ENCODE measurements at regions of chr10 and their contacts with region 1.

Region 1: DNA sequence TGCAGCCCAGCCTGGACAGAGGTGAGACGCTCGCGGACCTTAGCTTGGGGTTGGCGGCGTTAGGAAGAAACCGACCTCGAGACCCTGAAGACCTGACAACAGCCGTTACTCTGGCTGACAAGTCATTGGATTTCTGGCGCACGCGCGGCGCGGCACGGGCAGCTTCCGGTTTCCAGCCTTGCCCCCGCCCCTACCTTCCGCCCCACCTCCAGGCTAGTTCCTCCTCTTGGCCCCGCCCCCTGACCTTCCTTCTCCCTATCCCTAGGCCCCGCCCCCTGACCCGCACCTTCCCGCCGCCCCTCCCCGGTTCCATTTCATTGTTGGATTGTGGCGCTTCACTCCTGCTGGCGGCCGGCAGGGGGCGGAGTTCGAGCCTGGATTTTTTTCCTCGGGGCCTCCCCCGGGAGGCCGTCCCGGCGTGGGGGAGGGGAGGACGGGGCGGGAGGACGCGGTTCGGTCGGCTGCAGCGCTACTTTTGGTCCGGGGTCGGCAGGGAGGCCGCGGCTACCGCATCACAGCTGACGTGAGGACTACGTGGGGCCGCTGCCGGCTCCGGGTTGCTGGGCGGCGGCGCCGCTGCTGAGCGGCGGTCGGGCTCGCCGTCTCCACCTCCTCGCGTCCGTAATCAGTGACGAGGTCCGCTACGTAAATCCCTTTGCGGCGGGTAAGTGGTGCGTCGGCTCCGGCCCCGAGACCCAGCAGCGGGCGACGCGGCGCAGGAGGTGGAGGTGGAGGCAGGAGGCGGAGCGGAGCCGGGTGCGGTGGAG is at the start of gene CREM:
- DNase-seq: peak; percentile 94
- H3K4me3 ChIP-seq: peak within 1 kb of the TSS; percentile 68 to 91 (median 81)
- H3K27ac ChIP-seq: peak within 1 kb of the TSS; percentile 98
- H3K4me1 ChIP-seq: peaks cover 17% of the 10 kb centered on the region
- H3K27me3 ChIP-seq: no peaks in the 10 kb centered on the region
- CTCF ChIP-seq: peak; percentile 30 to 85
- total RNA-seq, gene CREM: 15.2 to 17.3 TPM

Region 2: DNA sequence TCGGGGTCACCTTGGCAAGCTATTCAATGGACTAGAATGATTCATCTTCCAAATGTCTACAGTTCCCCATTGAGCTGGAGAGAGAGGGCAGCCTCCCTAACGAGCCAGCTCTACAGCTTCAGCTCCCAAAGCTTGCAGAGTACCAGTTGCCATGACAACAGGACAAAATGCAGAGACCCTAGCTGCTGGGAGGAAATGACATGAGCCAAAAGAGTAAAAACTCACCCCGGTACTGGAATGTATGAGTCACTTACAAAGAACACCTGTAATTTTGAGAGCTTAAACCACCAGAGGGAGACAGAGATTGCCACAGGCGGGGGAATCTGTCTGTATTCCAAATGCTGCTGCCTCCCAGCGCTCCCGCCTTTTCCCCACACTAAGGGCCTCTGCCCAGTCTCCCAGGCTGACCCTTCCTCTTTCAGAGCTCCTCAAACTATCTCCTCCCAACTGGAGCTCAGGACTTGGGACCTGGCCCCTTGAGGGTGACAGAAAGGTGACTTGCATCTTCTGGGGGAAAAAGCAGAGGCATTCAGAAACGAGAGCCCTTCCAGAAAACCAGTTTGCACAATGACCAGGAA is 132.1 kb before region 1 on chr10:
- CTCF ChIA-PET with region 1: no interaction called
- dilution Hi-C with region 1: no loop called
- in situ Hi-C with region 1: no loop called
- intact Hi-C with region 1: loop called (anchors 1 kb)
- DNase-seq: peak; percentile 80
- H3K4me3 ChIP-seq: no peak overlapping the region
- H3K27ac ChIP-seq: peak overlapping the region; percentile 59
- H3K4me1 ChIP-seq: peaks cover 28% of the 10 kb centered on the region
- H3K27me3 ChIP-seq: no peaks in the 10 kb centered on the region
- CTCF ChIP-seq: peak; percentile 66 to 92

Region 3: DNA sequence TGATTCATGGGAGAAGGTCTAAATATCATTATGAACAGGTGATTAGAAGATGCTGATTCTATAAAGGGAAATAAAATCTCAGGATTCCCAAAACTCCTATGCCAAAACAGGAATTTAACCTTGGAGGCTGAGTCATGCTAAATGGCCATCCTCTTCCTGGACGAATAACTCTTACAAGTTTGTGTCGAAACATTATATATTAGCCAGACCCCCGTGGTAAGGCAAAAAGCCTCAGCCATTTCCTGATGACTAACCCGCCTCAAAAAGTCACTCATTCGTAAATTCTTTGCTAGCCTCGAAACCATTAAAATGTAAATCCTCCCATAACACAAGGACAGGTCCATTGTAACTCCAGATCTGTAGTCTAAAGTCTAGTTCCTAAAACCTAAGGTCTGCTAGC is 68.6 kb before region 1 on chr10:
- CTCF ChIA-PET with region 1: no interaction called
- dilution Hi-C with region 1: no loop called
- in situ Hi-C with region 1: no loop called
- intact Hi-C with region 1: no loop called
- DNase-seq: peak; percentile 73
- H3K4me3 ChIP-seq: no peak overlapping the region
- H3K27ac ChIP-seq: no peak overlapping the region
- H3K4me1 ChIP-seq: peaks cover 19% of the 10 kb centered on the region
- H3K27me3 ChIP-seq: no peaks in the 10 kb centered on the region
- CTCF ChIP-seq: no peak

Region 4: GRCh38 chr10:35195361-35196306 is 68.9 kb after region 1 on chr10:
- CTCF ChIA-PET with region 1: interaction called, 34 read pairs
- dilution Hi-C with region 1: no loop called
- in situ Hi-C with region 1: no loop called
- intact Hi-C with region 1: loop called (anchors 1 kb)
- DNase-seq: peak; percentile 90
- H3K4me3 ChIP-seq: peak overlapping the region; percentile 32 to 50 (median 43)
- H3K27ac ChIP-seq: peak overlapping the region; percentile 69
- H3K4me1 ChIP-seq: peaks cover 18% of the 10 kb centered on the region
- H3K27me3 ChIP-seq: no peaks in the 10 kb centered on the region
- CTCF ChIP-seq: peak; percentile 84 to 90

Region 5: GRCh38 chr10:35218339-35218955 is 91.7 kb after region 1 on chr10:
- CTCF ChIA-PET with region 1: interaction called, 5 read pairs
- dilution Hi-C with region 1: loop called (anchors 5 kb)
- in situ Hi-C with region 1: loop called in 1 of 2 experiments (anchors 5 kb)
- intact Hi-C with region 1: loop called (anchors 1 kb)
- DNase-seq: peak; percentile 65
- H3K4me3 ChIP-seq: no peak overlapping the region
- H3K27ac ChIP-seq: no peak overlapping the region
- H3K4me1 ChIP-seq: no peaks in the 10 kb centered on the region
- H3K27me3 ChIP-seq: no peaks in the 10 kb centered on the region
- CTCF ChIP-seq: peak; percentile 74 to 77

Region 6: DNA sequence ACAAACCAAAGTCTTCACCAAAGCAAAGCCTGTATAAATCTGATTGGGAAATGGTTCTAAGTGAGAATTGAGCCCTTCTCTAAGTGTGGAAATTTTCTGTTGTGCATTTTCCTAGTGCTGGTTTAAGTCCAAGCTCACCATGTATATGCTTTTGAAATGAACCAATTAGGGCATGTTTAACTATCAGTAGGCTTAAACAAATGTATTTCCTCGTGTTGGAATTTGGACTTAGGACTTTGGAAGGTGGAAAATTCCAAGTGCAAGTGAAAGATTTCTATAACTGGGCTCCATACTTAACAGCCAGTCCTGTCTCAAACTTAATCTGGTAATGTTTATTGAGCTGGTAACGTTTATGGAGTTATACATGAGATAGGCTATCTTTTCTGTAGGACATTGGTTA is 238.1 kb after region 1 on chr10:
- CTCF ChIA-PET with region 1: no interaction called
- dilution Hi-C with region 1: no loop called
- in situ Hi-C with region 1: no loop called
- intact Hi-C with region 1: no loop called
- DNase-seq: no peak
- H3K4me3 ChIP-seq: no peak overlapping the region
- H3K27ac ChIP-seq: no peak overlapping the region
- H3K4me1 ChIP-seq: no peaks in the 10 kb centered on the region
- H3K27me3 ChIP-seq: no peaks in the 10 kb centered on the region
- CTCF ChIP-seq: no peak

Region 7: GRCh38 chr10:35546824-35547273 is 420.1 kb after region 1 on chr10:
- CTCF ChIA-PET with region 1: no interaction called
- dilution Hi-C with region 1: no loop called
- in situ Hi-C with region 1: loop called in 1 of 2 experiments (anchors 25 kb)
- intact Hi-C with region 1: loop called (anchors 5 kb)
- DNase-seq: peak; percentile 95
- H3K4me3 ChIP-seq: no peak overlapping the region
- H3K27ac ChIP-seq: peak overlapping the region; percentile 79
- H3K4me1 ChIP-seq: peaks cover 26% of the 10 kb centered on the region
- H3K27me3 ChIP-seq: no peaks in the 10 kb centered on the region
- CTCF ChIP-seq: peak in 1 of 2 donors; percentile 39

Region 8: GRCh38 chr10:35635576-35635975 is 508.9 kb after region 1 on chr10:
- CTCF ChIA-PET with region 1: no interaction called
- dilution Hi-C with region 1: no loop called
- in situ Hi-C with region 1: no loop called
- intact Hi-C with region 1: loop called (anchors 10 kb)
- DNase-seq: peak; percentile 63
- H3K4me3 ChIP-seq: no peak overlapping the region
- H3K27ac ChIP-seq: no peak overlapping the region
- H3K4me1 ChIP-seq: peaks cover 35% of the 10 kb centered on the region
- H3K27me3 ChIP-seq: no peaks in the 10 kb centered on the region
- CTCF ChIP-seq: peak; percentile 92 to 93

Region 9: GRCh38 chr10:36880898-36881297 is 1754.2 kb after region 1 on chr10:
- CTCF ChIA-PET with region 1: no interaction called
- dilution Hi-C with region 1: no loop called
- in situ Hi-C with region 1: no loop called
- intact Hi-C with region 1: loop called (anchors 5 kb)
- DNase-seq: peak; percentile 15
- H3K4me3 ChIP-seq: no peak overlapping the region
- H3K27ac ChIP-seq: no peak overlapping the region
- H3K4me1 ChIP-seq: no peaks in the 10 kb centered on the region
- H3K27me3 ChIP-seq: no peaks in the 10 kb centered on the region
- CTCF ChIP-seq: peak; percentile 50 to 69

Measured in mammary epithelial cell (primary cell).